Caco-2 (cell line): ENCODE measurements at regions of chr21 and their contacts with region 1.

Region 1: DNA sequence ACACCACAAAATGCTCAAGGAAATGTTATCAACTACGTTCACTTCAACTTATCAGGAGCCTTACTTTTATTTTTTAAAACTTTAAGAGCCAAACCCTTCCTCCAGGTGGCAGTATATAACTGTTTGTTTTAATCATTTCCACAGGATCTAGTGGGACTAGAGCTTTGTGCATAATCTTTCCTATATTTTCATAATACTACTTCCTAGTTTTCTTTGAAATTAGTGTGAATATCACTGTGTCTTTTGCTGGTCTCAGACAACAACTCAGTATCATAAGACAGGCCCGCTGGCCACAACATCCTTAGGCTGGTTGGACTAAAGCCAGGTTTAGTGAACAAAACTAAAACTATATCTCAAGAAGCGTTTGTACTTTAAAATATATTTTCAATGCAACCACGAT is 145.5 kb downstream of the TIAM1 start:
- DNase-seq: peak in 1 of 2 experiments; percentile 43
- H3K4me3 ChIP-seq: no peak overlapping the region
- H3K4me3 Mint-ChIP-seq: no peak overlapping the region
- H3K27ac Mint-ChIP-seq: no peak overlapping the region
- H3K4me1 ChIP-seq: peaks cover 14% of the 10 kb centered on the region; the same call in 1 of the 2 replicates
- H3K4me1 Mint-ChIP-seq: peaks cover 11% of the 10 kb centered on the region
- H3K27me3 ChIP-seq: no peaks in the 10 kb centered on the region
- H3K27me3 Mint-ChIP-seq: no peaks in the 10 kb centered on the region
- CTCF ChIP-seq: peak; percentile 36 to 40

Region 2: GRCh38 chr21:31235671-31236521 is 37.3 kb after region 1 on chr21:
- CTCF ChIA-PET with region 1: no interaction called
- POLR2A ChIA-PET with region 1: no interaction called
- intact Hi-C with region 1: no loop called
- DNase-seq: peak in 1 of 2 experiments; percentile 23
- H3K4me3 ChIP-seq: no peak overlapping the region
- H3K4me3 Mint-ChIP-seq: no peak overlapping the region
- H3K27ac Mint-ChIP-seq: no peak overlapping the region
- H3K4me1 ChIP-seq: no peaks in the 10 kb centered on the region
- H3K4me1 Mint-ChIP-seq: peaks cover 9% of the 10 kb centered on the region
- H3K27me3 ChIP-seq: no peaks in the 10 kb centered on the region
- H3K27me3 Mint-ChIP-seq: no peaks in the 10 kb centered on the region
- CTCF ChIP-seq: no peak

Region 3: GRCh38 chr21:31347435-31348032 is 149.0 kb after region 1 on chr21:
- CTCF ChIA-PET with region 1: no interaction called
- POLR2A ChIA-PET with region 1: no interaction called
- intact Hi-C with region 1: loop called (anchors 5 kb)
- DNase-seq: peak in 1 of 2 experiments; percentile 32
- H3K4me3 ChIP-seq: no peak overlapping the region
- H3K4me3 Mint-ChIP-seq: peak overlapping the region; percentile 44
- H3K27ac Mint-ChIP-seq: no peak overlapping the region
- H3K4me1 ChIP-seq: no peaks in the 10 kb centered on the region
- H3K4me1 Mint-ChIP-seq: peaks cover 9% of the 10 kb centered on the region
- H3K27me3 ChIP-seq: no peaks in the 10 kb centered on the region
- H3K27me3 Mint-ChIP-seq: no peaks in the 10 kb centered on the region
- CTCF ChIP-seq: peak; percentile 55 to 58

Region 4: GRCh38 chr21:31457675-31458074 is 259.1 kb after region 1 on chr21:
- CTCF ChIA-PET with region 1: no interaction called
- POLR2A ChIA-PET with region 1: no interaction called
- intact Hi-C with region 1: loop called (anchors 5 kb)
- DNase-seq: peak in 1 of 2 experiments; percentile 12
- H3K4me3 ChIP-seq: no peak overlapping the region
- H3K4me3 Mint-ChIP-seq: no peak overlapping the region
- H3K27ac Mint-ChIP-seq: no peak overlapping the region
- H3K4me1 ChIP-seq: no peaks in the 10 kb centered on the region
- H3K4me1 Mint-ChIP-seq: no peaks in the 10 kb centered on the region
- H3K27me3 ChIP-seq: no peaks in the 10 kb centered on the region
- H3K27me3 Mint-ChIP-seq: no peaks in the 10 kb centered on the region
- CTCF ChIP-seq: peak; percentile 17 to 42

Region 5: GRCh38 chr21:31604591-31605190 is 406.1 kb after region 1 on chr21:
- CTCF ChIA-PET with region 1: no interaction called
- POLR2A ChIA-PET with region 1: no interaction called
- intact Hi-C with region 1: loop called (anchors 1 kb)
- DNase-seq: peak; percentile 46 to 54
- H3K4me3 ChIP-seq: no peak overlapping the region
- H3K4me3 Mint-ChIP-seq: no peak overlapping the region
- H3K27ac Mint-ChIP-seq: no peak overlapping the region
- H3K4me1 ChIP-seq: no peaks in the 10 kb centered on the region
- H3K4me1 Mint-ChIP-seq: no peaks in the 10 kb centered on the region
- H3K27me3 ChIP-seq: no peaks in the 10 kb centered on the region
- H3K27me3 Mint-ChIP-seq: no peaks in the 10 kb centered on the region
- CTCF ChIP-seq: peak; percentile 71 to 83